ENCODE measurements at regions of chr6 and their contacts with region 1.

Region 1: GRCh38 chr6:85642774-85643536 is at the start of gene SYNCRIP:
- DNase-seq: peak; percentile 100
- H3K4me3 Mint-ChIP-seq: peak within 1 kb of the TSS; percentile 99
- H3K27ac Mint-ChIP-seq: peak within 1 kb of the TSS; percentile 100
- H3K4me1 Mint-ChIP-seq: peaks cover 42% of the 10 kb centered on the region
- H3K27me3 Mint-ChIP-seq: peaks cover 2% of the 10 kb centered on the region
- total RNA-seq, gene SYNCRIP: 228 and 232 TPM in 2 replicates

Region 2: GRCh38 chr6:85298553-85298952 is 344.4 kb before region 1 on chr6:
- intact Hi-C with region 1: no loop called
- DNase-seq: no peak
- H3K4me3 Mint-ChIP-seq: no peak overlapping the region
- H3K27ac Mint-ChIP-seq: no peak overlapping the region
- H3K4me1 Mint-ChIP-seq: no peaks in the 10 kb centered on the region
- H3K27me3 Mint-ChIP-seq: peaks cover 5% of the 10 kb centered on the region

Region 3: DNA sequence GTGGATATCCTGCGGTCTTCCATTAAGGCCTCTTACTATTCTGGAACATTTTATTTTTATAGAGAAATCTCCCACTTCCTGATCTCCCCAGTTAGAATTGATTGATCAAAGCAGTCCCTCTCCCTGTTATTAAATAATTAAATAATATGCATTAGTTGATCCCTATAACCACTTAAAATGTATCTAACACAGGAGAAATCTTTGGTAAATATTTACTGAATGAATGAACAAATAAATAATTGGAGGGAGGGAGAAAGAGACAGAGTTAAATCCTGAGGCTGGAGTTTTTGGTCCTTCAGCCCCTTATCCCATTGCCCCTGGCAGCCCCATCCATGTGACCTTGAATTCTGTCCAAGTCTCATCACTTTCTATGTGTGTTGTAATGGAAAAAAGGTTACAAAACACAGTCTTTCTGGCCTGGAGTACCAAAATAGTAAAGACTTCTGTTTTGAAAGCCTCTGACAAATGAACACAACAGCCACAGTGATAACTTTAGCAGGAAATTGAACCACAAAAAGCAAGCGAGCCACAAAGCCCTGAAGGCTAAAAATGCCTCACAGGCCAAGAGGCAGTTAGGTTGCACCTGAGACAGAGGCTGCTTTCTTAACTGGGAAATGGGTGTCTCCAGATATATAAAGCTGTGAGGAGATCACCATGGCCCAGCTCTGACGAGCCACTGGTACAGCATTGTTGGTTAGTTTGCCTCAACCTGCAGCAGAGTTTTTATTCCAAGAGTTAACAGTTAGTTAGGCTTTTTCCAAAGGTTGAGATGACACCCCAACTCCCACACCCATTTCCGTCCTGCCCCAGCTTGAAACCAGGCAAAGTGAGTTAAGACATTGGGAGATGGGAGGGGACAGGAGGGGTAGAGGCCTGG is 181.8 kb before region 1 on chr6:
- intact Hi-C with region 1: loop called (anchors 1 kb)
- DNase-seq: peak; percentile 91
- H3K4me3 Mint-ChIP-seq: peak overlapping the region; percentile 70
- H3K27ac Mint-ChIP-seq: peak overlapping the region; percentile 93
- H3K4me1 Mint-ChIP-seq: peaks cover 91% of the 10 kb centered on the region
- H3K27me3 Mint-ChIP-seq: no peaks in the 10 kb centered on the region

Region 4: DNA sequence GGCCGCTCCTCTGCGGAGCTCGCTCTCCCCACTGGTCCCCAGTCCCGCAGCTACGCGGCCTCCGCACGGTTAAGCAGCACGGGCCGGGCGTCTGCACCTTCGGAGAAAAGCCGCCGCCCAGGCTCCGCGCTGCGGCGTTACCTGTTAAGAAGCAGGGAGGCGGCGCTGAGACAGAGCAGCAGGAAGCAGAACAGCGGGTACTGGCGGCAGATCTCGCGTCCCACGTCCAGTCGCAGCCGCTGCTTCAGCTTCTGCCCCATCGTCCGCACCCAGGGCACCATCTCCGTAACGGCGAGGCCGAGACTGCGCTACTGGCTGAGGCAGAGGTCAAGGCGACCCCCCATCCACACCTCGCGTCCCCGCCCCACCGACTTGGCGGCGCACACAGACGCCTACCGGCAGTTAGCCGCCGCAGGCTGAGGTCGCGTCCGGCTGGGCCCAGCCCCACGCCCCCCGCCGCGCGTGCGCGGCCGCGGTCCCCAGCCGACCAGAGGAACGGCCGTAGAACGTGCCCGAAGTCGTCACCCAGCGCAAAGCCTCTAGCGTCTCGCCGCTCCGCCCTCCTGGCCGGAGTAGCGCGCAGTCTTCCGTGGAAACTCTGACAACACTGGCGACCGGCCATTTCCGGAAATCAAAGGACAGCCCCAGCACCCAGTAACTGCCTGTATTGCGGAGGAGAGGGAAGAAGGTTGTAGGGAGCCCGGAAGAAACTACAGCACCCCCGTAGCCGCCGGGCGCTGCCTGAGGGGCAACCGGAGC is 49.3 kb before region 1 on chr6 and contains the start of gene SNX14:
- intact Hi-C with region 1: loop called (anchors 1 kb)
- DNase-seq: peak; percentile 93
- H3K4me3 Mint-ChIP-seq: peak within 1 kb of the TSS; percentile 97
- H3K27ac Mint-ChIP-seq: peak within 1 kb of the TSS; percentile 96
- H3K4me1 Mint-ChIP-seq: peaks cover 20% of the 10 kb centered on the region
- H3K27me3 Mint-ChIP-seq: peaks cover 3% of the 10 kb centered on the region
- total RNA-seq, gene SNX14: 45.4 and 47.1 TPM in 2 replicates

Region 5: GRCh38 chr6:85612690-85613474 is 30.1 kb before region 1 on chr6:
- intact Hi-C with region 1: loop called (anchors 2 kb)
- DNase-seq: no peak
- H3K4me3 Mint-ChIP-seq: no peak overlapping the region
- H3K27ac Mint-ChIP-seq: no peak overlapping the region
- H3K4me1 Mint-ChIP-seq: peaks cover 6% of the 10 kb centered on the region
- H3K27me3 Mint-ChIP-seq: no peaks in the 10 kb centered on the region

Region 6: DNA sequence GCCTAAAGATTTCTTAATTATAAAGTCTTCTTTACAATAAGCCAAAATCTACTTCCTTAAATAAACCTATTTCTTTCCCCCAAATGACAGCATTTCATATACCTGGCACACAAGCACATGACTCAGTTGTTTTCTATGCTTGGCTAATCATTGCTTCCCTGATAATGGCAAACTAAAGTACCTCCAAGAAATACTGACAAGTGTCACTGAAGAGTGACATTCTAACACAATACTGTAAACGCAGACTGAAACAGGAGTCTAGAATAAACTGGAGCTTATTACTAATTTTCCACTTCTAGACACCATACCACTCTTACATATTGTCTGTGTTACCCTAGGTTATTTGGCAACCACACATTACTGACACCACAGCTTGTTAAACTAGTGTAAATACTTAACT is 14.6 kb before region 1 on chr6:
- intact Hi-C with region 1: loop called (anchors 2 kb)
- DNase-seq: no peak
- H3K4me3 Mint-ChIP-seq: no peak overlapping the region
- H3K27ac Mint-ChIP-seq: no peak overlapping the region
- H3K4me1 Mint-ChIP-seq: peaks cover 41% of the 10 kb centered on the region
- H3K27me3 Mint-ChIP-seq: no peaks in the 10 kb centered on the region

Region 7: DNA sequence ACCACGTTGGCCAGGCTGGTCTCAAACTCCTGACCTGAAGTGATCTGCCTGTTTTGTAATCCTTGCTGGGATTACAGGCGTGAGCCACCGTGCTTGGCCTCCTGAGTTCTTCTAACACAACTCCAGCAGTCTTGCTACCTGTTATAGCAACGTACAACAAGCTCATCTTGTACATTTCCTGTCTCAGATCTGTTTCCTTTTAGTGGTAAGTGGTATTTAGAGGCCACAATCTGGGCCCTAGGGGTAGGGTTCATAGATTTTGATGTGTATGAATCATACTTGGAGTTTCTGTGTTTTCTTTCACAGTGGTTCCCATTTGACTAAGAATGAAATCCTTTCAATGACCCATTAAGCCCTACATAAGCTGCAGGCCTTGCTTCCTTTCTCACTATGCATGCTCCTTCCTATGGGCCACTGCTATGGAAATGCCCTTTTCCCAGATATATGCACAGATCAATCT is 26.8 kb after region 1 on chr6:
- intact Hi-C with region 1: loop called (anchors 1 kb)
- DNase-seq: peak; percentile 86
- H3K4me3 Mint-ChIP-seq: peak overlapping the region; percentile 78
- H3K27ac Mint-ChIP-seq: peak overlapping the region; percentile 89
- H3K4me1 Mint-ChIP-seq: peaks cover 44% of the 10 kb centered on the region
- H3K27me3 Mint-ChIP-seq: no peaks in the 10 kb centered on the region

Region 8: DNA sequence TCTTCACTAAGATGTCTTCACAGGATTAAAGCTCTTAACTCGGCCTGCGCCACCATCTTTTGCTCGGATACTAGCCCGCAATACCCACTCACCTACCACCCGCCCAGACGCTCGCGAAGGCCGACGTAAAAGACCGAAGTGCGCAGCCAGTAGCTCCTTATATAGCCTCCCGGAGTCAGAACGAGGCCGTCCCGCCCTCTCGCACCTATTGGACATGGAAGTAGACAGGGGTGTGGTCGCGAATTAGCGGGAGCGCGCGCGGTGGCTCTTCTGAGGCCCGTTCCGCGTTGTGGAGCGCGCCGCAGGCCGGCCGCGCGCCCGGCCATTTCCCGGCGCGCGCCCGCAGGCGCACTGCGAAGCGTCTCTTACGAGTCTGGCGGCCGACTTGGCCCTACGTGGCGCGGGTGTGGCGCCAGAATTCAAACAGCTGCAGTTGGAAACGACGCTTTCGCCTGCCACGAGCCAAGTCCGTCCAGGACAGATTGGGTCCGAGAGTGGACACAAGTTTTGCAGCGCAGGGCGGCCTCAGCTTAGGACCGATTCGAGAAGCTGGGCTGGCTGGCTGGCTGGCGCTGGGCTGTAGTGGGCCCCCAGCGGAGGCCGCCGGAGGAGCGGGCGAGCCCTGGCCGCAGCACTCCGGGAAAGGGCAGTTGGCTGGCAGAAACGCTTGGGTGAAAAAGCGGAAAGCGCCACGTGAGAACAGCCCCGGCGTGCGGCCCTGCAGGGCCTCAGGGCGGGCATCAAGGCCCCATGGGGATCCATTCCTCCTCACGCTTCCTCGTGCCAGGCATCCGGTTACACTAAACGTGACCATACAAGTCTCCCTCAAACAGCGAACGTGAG is 35.9 kb after region 1 on chr6:
- intact Hi-C with region 1: loop called (anchors 1 kb)
- DNase-seq: peak; percentile 99
- H3K4me3 Mint-ChIP-seq: peak overlapping the region; percentile 95
- H3K27ac Mint-ChIP-seq: peak overlapping the region; percentile 97
- H3K4me1 Mint-ChIP-seq: peaks cover 38% of the 10 kb centered on the region
- H3K27me3 Mint-ChIP-seq: no peaks in the 10 kb centered on the region

Measured in activated CD4-positive, alpha-beta T cell treated with anti-CD3 and anti-CD28 coated beads, Interleukin-2, amount 10 ng/mL, durations not matched to agents 24 days and 14 days (primary cell).